H1 (cell line): ENCODE measurements at regions of chr2 and their contacts with region 1.

Region 1: GRCh38 chr2:68901199-68901960 is 30.2 kb upstream of the BMP10 start:
- DNase-seq: no peak
- H3K4me3 ChIP-seq: no peak overlapping the region
- H3K27ac ChIP-seq: no peak overlapping the region
- H3K4me1 ChIP-seq: no peaks in the 10 kb centered on the region
- H3K27me3 ChIP-seq: no peaks in the 10 kb centered on the region
- CTCF ChIP-seq: peak in 2 of 3 experiments; percentile 72 to 79; a peak in 3 of 4 replicates
- EP300 ChIP-seq: no peak
- POLR2A ChIP-seq: no peak
- RAD21 ChIP-seq: peak; percentile 89 to 94

Region 2: GRCh38 chr2:68715353-68716041 is 185.9 kb before region 1 on chr2:
- CTCF ChIA-PET with region 1: interaction called, 10 read pairs
- POLR2A ChIA-PET with region 1: no interaction called
- DNase-seq: peak; percentile 80 to 81
- H3K4me3 ChIP-seq: no peak overlapping the region
- H3K27ac ChIP-seq: no peak overlapping the region
- H3K4me1 ChIP-seq: no peaks in the 10 kb centered on the region
- H3K27me3 ChIP-seq: no peaks in the 10 kb centered on the region
- CTCF ChIP-seq: peak; percentile 84 to 90 (median 87)
- EP300 ChIP-seq: no peak
- POLR2A ChIP-seq: no peak
- RAD21 ChIP-seq: peak; percentile 81 to 85

Region 3: GRCh38 chr2:68721482-68722101 is 179.8 kb before region 1 on chr2:
- CTCF ChIA-PET with region 1: interaction called, 15 read pairs
- POLR2A ChIA-PET with region 1: no interaction called
- DNase-seq: no peak
- H3K4me3 ChIP-seq: no peak overlapping the region
- H3K27ac ChIP-seq: no peak overlapping the region
- H3K4me1 ChIP-seq: no peaks in the 10 kb centered on the region
- H3K27me3 ChIP-seq: no peaks in the 10 kb centered on the region
- CTCF ChIP-seq: no peak
- EP300 ChIP-seq: no peak
- POLR2A ChIP-seq: no peak
- RAD21 ChIP-seq: no peak